ENCODE measurements at regions of chr6 and their contacts with region 1.

Region 1: DNA sequence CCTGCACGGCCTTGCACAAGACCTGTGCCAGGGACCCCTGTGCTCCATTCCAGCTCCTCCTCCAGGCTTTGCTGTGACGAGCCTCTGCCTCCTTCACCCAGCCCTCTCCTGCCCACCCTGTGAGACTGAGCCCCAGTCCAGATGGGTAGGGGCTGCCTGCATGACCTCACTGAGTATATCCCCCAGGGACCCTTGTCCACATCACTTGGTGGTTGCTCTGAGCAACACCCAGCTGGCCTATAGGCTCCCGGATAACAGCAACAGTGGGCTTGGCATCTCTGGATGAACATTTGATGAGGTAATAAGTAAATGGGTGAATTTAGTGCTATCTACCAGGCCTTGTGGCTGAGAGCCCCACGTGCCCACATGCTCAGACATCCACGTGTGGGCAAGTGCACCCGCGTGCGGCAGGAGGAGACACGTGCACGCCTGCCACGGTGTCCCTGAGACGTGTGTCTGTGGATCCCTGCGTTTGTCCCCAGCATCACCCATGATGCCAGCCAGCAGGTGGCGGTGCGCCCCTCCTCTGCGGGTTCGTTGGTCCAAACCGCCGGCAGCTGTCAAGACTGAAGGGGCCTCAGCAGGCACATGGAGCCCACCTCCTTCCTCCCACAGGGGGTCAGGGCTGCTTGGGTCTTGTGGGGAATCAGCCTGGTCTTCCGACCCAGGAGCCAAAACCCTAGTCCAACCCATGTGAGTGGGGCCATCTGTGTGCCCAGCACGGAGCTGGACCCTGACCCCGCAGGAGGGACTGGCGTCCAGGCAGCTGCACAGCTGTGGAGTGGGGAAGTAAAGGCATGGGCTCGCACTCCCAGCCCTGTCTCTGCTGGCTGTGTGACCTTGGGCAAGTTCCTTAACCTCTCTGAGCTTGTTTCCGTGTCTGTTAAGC is 45.9 kb downstream of the FGD2 start:
- DNase-seq: peak; percentile 94
- H3K4me3 Mint-ChIP-seq: peak overlapping the region; percentile 89
- H3K27ac Mint-ChIP-seq: peak overlapping the region; percentile 98
- H3K4me1 Mint-ChIP-seq: peaks cover 82% of the 10 kb centered on the region
- H3K27me3 Mint-ChIP-seq: no peaks in the 10 kb centered on the region

Region 2: GRCh38 chr6:37103169-37104039 is 52.0 kb after region 1 on chr6:
- CTCF ChIA-PET with region 1: interaction called, 11 read pairs
- DNase-seq: peak; percentile 37
- H3K4me3 Mint-ChIP-seq: peak overlapping the region; percentile 66
- H3K27ac Mint-ChIP-seq: peak overlapping the region; percentile 86
- H3K4me1 Mint-ChIP-seq: peaks cover 55% of the 10 kb centered on the region
- H3K27me3 Mint-ChIP-seq: no peaks in the 10 kb centered on the region

Region 3: DNA sequence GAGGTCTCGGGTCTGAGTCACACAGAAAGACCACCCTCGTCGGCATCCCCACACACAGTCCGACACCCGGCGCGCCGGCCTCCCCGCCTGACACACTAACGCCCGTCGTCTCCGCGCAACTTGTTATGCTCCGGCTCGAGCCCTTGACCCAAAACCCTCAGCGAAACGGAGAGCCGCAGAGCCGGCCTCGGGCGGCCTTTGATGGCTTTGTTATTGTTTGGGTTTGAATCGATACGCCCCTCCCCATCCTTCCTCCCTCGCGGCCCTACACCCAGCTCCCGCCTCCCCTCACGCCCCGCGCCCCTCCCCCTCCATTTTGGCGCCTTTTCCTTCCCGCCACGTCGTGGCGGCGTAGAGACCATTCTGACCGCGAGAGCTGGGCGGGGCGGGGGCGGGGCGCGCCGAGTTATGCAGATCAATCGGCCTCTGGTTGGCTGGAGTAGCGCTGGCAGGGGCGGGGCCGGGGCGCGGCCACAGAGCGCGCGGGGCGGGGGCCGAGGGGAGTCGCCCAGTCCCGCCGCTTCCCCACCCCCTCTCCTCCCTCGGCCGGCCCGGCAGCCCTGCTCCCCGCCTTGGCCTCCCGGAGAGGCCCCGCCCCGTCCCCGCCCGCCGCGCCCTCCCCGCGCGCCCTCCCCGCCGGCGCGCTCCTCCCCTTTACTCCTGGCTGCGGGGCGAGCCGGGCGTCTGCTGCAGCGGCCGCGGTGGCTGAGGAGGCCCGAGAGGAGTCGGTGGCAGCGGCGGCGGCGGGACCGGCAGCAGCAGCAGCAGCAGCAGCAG is 118.3 kb after region 1 on chr6 and contains the start of gene PIM1:
- CTCF ChIA-PET with region 1: interaction called, 145 read pairs
- DNase-seq: peak; percentile 99
- H3K4me3 Mint-ChIP-seq: peak within 1 kb of the TSS; percentile 97
- H3K27ac Mint-ChIP-seq: peak within 1 kb of the TSS; percentile 99
- H3K4me1 Mint-ChIP-seq: peaks cover 21% of the 10 kb centered on the region
- H3K27me3 Mint-ChIP-seq: peaks cover 10% of the 10 kb centered on the region

Region 4: GRCh38 chr6:37177077-37177934 is 125.9 kb after region 1 on chr6:
- CTCF ChIA-PET with region 1: interaction called, 145 read pairs
- DNase-seq: no peak
- H3K4me3 Mint-ChIP-seq: peak overlapping the region; percentile 94
- H3K27ac Mint-ChIP-seq: peak overlapping the region; percentile 98
- H3K4me1 Mint-ChIP-seq: peaks cover 70% of the 10 kb centered on the region
- H3K27me3 Mint-ChIP-seq: peaks cover 2% of the 10 kb centered on the region

Region 5: GRCh38 chr6:37182736-37183590 is 131.6 kb after region 1 on chr6:
- CTCF ChIA-PET with region 1: interaction called, 14 read pairs
- DNase-seq: peak; percentile 84
- H3K4me3 Mint-ChIP-seq: peak overlapping the region; percentile 67
- H3K27ac Mint-ChIP-seq: peak overlapping the region; percentile 95
- H3K4me1 Mint-ChIP-seq: peaks cover 86% of the 10 kb centered on the region
- H3K27me3 Mint-ChIP-seq: no peaks in the 10 kb centered on the region

Region 6: DNA sequence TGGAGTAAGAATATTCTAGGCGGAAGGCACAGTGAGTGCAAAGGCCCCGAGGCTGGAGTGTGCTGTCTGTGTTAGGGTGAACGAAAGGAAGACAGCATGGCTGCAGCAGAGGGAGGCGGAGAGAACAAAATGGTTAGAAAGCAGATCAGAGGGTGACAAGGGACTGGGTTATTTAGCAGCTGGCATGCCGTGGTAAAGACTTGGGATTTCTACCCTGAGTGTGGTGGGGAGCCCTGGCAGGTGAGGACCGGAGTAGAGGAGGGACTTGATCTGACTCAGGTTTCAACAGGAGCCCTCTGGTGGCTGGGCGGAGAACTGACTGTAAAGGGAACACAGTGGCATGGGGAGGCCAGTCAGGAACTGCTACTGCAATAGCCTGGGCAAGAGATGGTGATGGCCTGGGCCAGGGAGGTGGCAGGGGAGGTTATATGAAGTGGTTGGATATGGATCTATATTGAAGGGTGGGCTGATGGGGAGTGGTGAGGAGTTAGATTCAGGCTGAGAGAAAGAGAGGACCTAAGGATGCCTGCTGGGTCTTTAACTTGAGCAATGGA is 156.6 kb after region 1 on chr6:
- CTCF ChIA-PET with region 1: interaction called, 196 read pairs
- DNase-seq: peak; percentile 95
- H3K4me3 Mint-ChIP-seq: peak overlapping the region; percentile 46
- H3K27ac Mint-ChIP-seq: peak overlapping the region; percentile 89
- H3K4me1 Mint-ChIP-seq: peaks cover 73% of the 10 kb centered on the region
- H3K27me3 Mint-ChIP-seq: no peaks in the 10 kb centered on the region

Region 7: GRCh38 chr6:37314487-37315156 is 263.2 kb after region 1 on chr6:
- CTCF ChIA-PET with region 1: interaction called, 16 read pairs
- DNase-seq: peak; percentile 75
- H3K4me3 Mint-ChIP-seq: no peak overlapping the region
- H3K27ac Mint-ChIP-seq: no peak overlapping the region
- H3K4me1 Mint-ChIP-seq: peaks cover 17% of the 10 kb centered on the region
- H3K27me3 Mint-ChIP-seq: no peaks in the 10 kb centered on the region